ENCODE measurements at regions of chr3 and their contacts with region 1.

Region 1: DNA sequence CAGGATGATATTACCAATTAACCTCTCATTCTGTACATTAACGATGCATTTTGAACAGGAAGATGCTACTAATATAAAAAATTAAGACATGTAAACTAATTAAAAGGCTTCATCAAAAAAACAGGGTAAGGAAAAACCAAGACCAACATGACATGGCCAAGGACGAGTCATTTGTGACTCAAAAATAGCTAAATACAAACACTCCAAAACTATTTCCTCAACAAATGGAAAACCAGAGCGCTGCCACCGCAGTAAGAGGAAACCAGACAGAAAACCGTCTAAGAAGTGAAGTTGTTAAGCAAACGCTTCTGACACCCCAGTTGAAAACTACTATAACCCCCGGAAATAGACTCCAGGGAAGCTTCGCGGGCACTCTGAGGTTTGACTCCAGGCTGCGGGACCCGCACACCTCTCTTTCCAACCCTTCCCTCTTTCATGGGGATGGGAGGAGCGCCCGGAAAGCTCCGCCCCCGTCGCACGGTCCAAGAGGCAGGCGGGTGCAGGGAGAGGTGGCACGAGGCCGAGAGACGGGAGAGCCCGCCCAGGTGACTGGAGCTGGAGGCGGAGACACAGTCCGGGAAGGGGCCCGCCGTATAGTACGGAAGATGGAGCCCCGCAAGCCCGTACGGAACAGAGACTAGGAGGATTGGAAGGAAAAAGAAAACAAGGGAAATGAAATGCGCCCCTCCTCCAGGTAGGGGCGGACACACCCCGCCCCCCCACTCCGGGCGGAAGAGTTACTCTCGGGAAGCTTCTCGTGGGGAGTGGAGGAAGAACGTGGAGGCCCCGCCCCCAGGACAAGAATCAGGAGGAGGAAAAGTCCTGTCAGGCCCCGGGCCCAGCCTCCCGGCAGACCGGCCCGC is 708 bp downstream of the DCAF1 start:
- DNase-seq: peak; percentile 96 to 98 (median 97)
- ATAC-seq: peak; percentile 79 to 86 (median 82)
- H3K4me3 ChIP-seq: peak overlapping the region; percentile 73 to 86 (median 83)
- H3K27ac ChIP-seq: peak overlapping the region; percentile 78 to 95 (median 91)
- H3K4me1 ChIP-seq: no peaks in the 10 kb centered on the region
- H3K27me3 ChIP-seq: no peaks in the 10 kb centered on the region
- CTCF ChIP-seq: no peak
- POLR2A ChIP-seq: peak; percentile 63

Region 2: DNA sequence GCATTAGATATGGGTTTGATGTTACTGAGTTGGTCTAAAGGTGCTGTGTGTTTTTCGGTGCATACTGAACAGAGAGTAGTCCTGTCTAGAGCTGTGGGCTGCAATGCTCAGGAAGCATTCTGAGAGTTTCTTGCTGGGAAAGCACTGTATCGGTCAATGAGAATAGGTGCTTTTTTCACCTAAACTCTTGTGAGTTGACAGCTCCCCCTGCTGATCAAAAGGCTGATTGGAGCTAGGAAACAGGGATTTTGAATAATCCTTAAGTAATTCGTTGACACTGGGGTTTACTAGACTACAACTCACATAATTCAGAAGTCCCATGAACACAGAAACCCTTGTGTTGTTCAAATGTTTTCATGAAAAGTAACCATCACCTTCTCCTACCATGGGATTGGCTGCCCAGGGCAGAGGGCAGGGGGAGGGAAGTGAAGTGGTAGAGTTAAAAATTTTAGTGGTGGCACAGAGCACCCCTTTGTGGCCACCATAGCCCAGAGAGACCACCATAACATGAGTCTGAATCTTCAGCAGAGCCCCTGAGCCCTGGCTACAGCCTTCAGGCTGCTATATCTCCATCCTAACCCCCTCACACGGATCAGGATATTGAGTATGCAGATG is 127.1 kb before region 1 on chr3:
- intact Hi-C with region 1: no loop called
- DNase-seq: peak in 1 of 3 donors; percentile 61
- ATAC-seq: peak; percentile 67 to 85 (median 78)
- H3K4me3 ChIP-seq: no peak overlapping the region
- H3K27ac ChIP-seq: no peak overlapping the region
- H3K4me1 ChIP-seq: peaks cover 0 to 11% (median 0%) of the 10 kb centered on the region in 4 donors
- H3K27me3 ChIP-seq: no peaks in the 10 kb centered on the region
- CTCF ChIP-seq: peak; percentile 63 to 74 (median 70)
- POLR2A ChIP-seq: no peak

Region 3: DNA sequence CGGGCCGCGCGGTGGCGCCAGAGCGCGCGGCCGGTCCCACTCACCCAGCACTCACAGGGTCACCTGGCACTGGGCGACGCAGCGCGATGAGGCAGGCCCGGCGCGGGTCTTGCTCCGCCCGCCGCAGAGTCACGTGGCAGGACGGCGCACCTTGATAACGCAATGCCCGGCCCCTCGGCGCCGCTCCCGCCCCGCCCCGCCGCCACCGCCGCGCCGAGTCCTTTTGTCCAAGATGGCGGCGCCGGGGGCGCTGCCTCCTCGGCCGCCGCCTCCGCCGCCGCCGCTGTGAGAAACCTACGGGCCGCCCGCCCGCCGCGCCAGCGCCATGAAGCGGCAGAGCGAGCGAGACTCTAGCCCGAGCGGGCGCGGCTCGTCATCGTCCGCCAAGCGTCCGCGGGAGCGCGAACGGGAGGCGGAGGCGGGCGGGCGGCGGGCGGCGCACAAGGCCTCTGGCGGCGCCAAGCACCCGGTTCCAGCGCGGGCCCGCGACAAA is 108.0 kb before region 1 on chr3 and contains the start of gene RBM15B:
- intact Hi-C with region 1: loop called (anchors 10 kb)
- DNase-seq: peak; percentile 99
- ATAC-seq: peak; percentile 93 to 98 (median 96)
- H3K4me3 ChIP-seq: peak within 1 kb of the TSS; percentile 63 to 82 (median 77)
- H3K27ac ChIP-seq: peak within 1 kb of the TSS; percentile 36 to 78 (median 76)
- H3K4me1 ChIP-seq: peaks cover 0 to 57% (median 23%) of the 10 kb centered on the region in 4 donors
- H3K27me3 ChIP-seq: no peaks in the 10 kb centered on the region
- CTCF ChIP-seq: peak; percentile 82 to 96 (median 95)
- POLR2A ChIP-seq: peak; percentile 80
- total RNA-seq, gene RBM15B: 7.1 to 14.1 (median 9.4) TPM

Region 4: DNA sequence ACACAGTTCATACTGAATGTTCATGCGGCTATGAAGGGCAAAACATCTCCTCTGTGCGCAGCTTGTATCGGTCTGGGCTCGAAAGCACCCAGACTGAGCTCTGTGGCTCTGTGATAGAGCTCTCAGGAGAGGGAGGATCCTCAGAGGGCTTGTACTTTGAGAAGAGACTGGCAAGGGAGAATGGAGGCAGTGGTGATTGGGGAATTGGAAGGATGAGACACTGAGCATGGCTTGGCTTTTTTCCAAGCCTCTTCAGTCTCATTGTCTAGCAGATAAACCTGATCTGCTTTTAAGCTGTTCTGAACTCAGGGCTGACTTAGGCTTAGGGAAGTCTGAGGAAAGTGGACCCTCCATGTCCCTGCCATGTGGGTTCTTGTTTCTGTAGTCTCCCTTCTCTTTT is 82.4 kb after region 1 on chr3:
- intact Hi-C with region 1: no loop called
- DNase-seq: no peak
- ATAC-seq: peak in 3 of 4 donors; percentile 30 to 50 (median 45)
- H3K4me3 ChIP-seq: no peak overlapping the region
- H3K27ac ChIP-seq: no peak overlapping the region
- H3K4me1 ChIP-seq: no peaks in the 10 kb centered on the region
- H3K27me3 ChIP-seq: no peaks in the 10 kb centered on the region
- CTCF ChIP-seq: no peak
- POLR2A ChIP-seq: no peak

Region 5: GRCh38 chr3:51637941-51638471 is 138.9 kb after region 1 on chr3:
- intact Hi-C with region 1: loop called (anchors 5 to 10 kb)
- DNase-seq: peak in 2 of 3 donors; percentile 31 to 55
- ATAC-seq: peak; percentile 84 to 96 (median 92)
- H3K4me3 ChIP-seq: no peak overlapping the region
- H3K27ac ChIP-seq: no peak overlapping the region
- H3K4me1 ChIP-seq: peaks cover 0 to 16% (median 0%) of the 10 kb centered on the region in 4 donors
- H3K27me3 ChIP-seq: no peaks in the 10 kb centered on the region
- CTCF ChIP-seq: peak; percentile 77 to 85 (median 83)
- POLR2A ChIP-seq: no peak

Region 6: DNA sequence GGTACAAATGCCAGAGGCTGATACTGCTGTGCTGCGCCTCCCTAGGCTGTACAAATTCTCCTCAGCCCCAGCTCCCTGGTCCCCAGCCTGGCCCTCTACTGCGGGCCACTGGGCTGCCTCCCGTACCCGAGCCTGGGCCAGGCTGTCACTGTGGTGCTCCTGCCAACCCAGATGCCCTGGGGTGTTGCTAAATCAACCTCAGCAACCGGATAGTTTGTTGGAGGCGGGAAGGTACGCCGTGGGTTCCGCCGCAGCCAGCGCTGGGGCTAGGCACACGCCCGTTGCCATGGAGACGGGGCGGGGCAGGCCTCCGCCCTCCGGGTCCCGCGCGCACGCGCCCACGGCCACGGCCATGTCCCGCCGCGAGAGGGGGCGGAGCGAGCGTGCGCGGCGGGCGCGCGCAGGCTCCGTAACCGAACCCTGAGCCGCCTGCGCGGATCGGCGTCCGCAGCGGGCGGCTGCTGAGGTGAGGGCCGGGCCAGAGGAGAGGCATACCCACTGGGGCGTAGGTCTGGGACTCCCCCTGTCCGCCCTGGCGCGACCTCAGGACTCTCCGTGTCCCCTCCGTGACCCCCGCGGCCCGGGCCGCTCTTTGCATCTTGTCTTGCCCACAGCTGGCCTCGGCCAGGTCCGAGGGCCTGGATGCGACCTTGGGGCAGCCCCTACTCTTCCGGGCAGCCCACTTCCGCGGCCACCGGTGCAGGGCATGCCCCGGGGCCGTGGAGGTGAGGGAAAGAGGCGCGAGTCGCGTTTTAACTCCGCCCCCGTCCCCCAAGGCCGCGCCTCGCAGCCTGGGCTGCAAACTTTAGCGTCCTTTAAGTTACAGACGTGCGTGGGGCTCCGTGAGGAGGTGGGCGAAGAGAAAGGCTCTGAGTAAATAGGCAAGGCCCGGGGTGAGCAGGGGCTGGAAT is 172.0 kb after region 1 on chr3 and contains the start of gene TEX264:
- intact Hi-C with region 1: loop called in 1 of 2 experiments (anchors 5 kb)
- DNase-seq: peak; percentile 97 to 98 (median 98)
- ATAC-seq: peak; percentile 84 to 90 (median 87)
- H3K4me3 ChIP-seq: peak within 1 kb of the TSS; percentile 70 to 95 (median 94)
- H3K27ac ChIP-seq: peak within 1 kb of the TSS; percentile 70 to 88 (median 82)
- H3K4me1 ChIP-seq: peaks cover 0 to 44% (median 10%) of the 10 kb centered on the region in 4 donors
- H3K27me3 ChIP-seq: no peaks in the 10 kb centered on the region
- CTCF ChIP-seq: peak in 1 of 4 donors; percentile 4
- POLR2A ChIP-seq: peak; percentile 75
- total RNA-seq, gene TEX264: 26.5 to 67.0 (median 40.8) TPM

Region 7: GRCh38 chr3:51682079-51682478 is 183.0 kb after region 1 on chr3:
- intact Hi-C with region 1: loop called in 1 of 2 experiments (anchors 5 kb)
- DNase-seq: peak; percentile 49 to 80 (median 61)
- ATAC-seq: peak; percentile 93 to 98 (median 96)
- H3K4me3 ChIP-seq: no peak overlapping the region
- H3K27ac ChIP-seq: no peak overlapping the region
- H3K4me1 ChIP-seq: peaks cover 0 to 14% (median 5%) of the 10 kb centered on the region in 4 donors
- H3K27me3 ChIP-seq: no peaks in the 10 kb centered on the region
- CTCF ChIP-seq: peak; percentile 78 to 91 (median 80)
- POLR2A ChIP-seq: no peak

Region 8: GRCh38 chr3:51696954-51697353 is 197.8 kb after region 1 on chr3:
- intact Hi-C with region 1: no loop called
- DNase-seq: no peak
- ATAC-seq: no peak
- H3K4me3 ChIP-seq: no peak overlapping the region
- H3K27ac ChIP-seq: no peak overlapping the region
- H3K4me1 ChIP-seq: no peaks in the 10 kb centered on the region
- H3K27me3 ChIP-seq: no peaks in the 10 kb centered on the region
- CTCF ChIP-seq: no peak
- POLR2A ChIP-seq: no peak

Measured in right lobe of liver (tissue), 6 donors.